Heart right ventricle (tissue), 16 donors: ENCODE measurements at regions of chr1 and their contacts with region 1.

Region 1: GRCh38 chr1:42335050-42335808 is at the start of gene FOXJ3:
- DNase-seq: peak; percentile 94 to 95
- ATAC-seq: peak; percentile 89 to 97 (median 95)
- H3K4me3 ChIP-seq: peak within 1 kb of the TSS; percentile 68 to 98 (median 92)
- H3K27ac ChIP-seq: peak within 1 kb of the TSS; percentile 88 to 97 (median 94)
- H3K4me1 ChIP-seq: peaks cover 4 to 51% (median 33%) of the 10 kb centered on the region in 9 donors
- H3K27me3 ChIP-seq: no peaks in the 10 kb centered on the region
- CTCF ChIP-seq: peak in 2 of 9 donors; percentile 1 to 5
- total RNA-seq, gene FOXJ3: 34.2 to 50.0 (median 41.6) TPM

Region 2: GRCh38 chr1:42456010-42456758 is 121.0 kb after region 1 on chr1 and contains the starts of genes PPCS and ZMYND12:
- intact Hi-C with region 1: loop called in 7 of 10 experiments (anchors 2 to 10 kb)
- DNase-seq: peak; percentile 83 to 93
- ATAC-seq: peak; percentile 95 to 98 (median 97)
- H3K4me3 ChIP-seq: peak within 1 kb of the TSS; percentile 78 to 96 (median 86)
- H3K27ac ChIP-seq: peak within 1 kb of the TSS; percentile 92 to 99 (median 95)
- H3K4me1 ChIP-seq: peaks cover 7 to 30% (median 21%) of the 10 kb centered on the region in 9 donors
- H3K27me3 ChIP-seq: no peaks in the 10 kb centered on the region
- CTCF ChIP-seq: peak in 1 of 9 donors; percentile 19
- total RNA-seq, gene PPCS: 33.2 to 50.0 (median 40.1) TPM
- total RNA-seq, gene ZMYND12: 0.52 to 5.9 (median 2.9) TPM

Region 3: GRCh38 chr1:42462828-42463763 is 127.9 kb after region 1 on chr1 and contains the start of gene CCDC30:
- intact Hi-C with region 1: loop called in 6 of 10 experiments (anchors 5 to 10 kb)
- DNase-seq: peak; percentile 90 to 96
- ATAC-seq: peak; percentile 99 to 100 (median 100)
- H3K4me3 ChIP-seq: peak within 1 kb of the TSS; percentile 47 to 89 (median 76)
- H3K27ac ChIP-seq: peak within 1 kb of the TSS in 6 of 10 donors; percentile 28 to 61 (median 51)
- H3K4me1 ChIP-seq: peaks cover 0 to 25% (median 19%) of the 10 kb centered on the region in 9 donors
- H3K27me3 ChIP-seq: no peaks in the 10 kb centered on the region
- CTCF ChIP-seq: no peak
- total RNA-seq, gene CCDC30: 0.70 to 3.2 (median 1.4) TPM

Region 4: DNA sequence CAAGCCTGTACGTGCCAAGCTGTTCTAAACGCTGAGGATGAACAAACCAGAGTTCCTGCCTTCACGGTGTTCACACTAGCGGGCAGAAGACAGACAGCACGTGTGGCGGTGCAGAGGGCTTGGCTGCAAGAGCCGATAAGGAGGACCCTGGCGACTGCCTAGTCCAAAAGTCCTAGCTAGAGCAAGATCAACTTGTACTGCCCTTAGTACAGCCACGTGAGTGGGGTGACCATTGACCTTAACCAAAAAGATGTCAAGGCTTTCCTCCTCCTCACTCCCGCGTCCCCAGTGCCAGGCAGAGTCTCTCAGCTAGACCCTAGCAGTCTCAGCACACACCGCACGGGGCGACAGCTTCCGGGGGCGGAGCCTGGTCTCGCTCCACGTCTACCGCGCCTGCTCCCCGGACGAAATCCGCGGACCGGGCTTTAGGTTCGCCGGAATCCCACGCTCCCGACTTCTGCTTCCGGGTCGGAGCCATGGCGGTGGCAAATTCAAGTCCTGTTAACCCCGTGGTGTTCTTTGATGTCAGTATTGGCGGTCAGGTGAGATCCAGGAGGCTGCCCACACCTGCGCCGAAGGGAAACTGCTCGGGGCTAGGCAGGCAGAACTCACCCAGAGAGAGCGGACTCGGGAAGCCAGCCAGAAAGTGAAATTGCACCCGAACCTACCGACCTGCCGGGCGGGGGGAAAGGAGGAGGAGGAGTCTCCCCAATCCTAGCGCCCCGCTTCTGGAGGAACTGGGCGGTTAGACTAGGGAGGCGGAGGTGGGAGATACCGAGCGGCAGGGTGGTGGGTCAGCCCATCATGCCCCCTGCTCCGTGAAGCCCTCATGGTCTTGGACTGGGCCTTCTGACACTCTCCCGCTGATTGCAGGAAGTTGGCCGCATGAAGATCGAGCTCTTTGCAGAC is 323.0 kb after region 1 on chr1 and contains the start of gene PPIH:
- intact Hi-C with region 1: loop called in 1 of 10 experiments (anchors 10 kb)
- DNase-seq: peak; percentile 95
- ATAC-seq: peak; percentile 100
- H3K4me3 ChIP-seq: peak within 1 kb of the TSS; percentile 54 to 99 (median 82)
- H3K27ac ChIP-seq: peak within 1 kb of the TSS in 9 of 10 donors; percentile 65 to 90 (median 85)
- H3K4me1 ChIP-seq: peaks cover 0 to 24% (median 13%) of the 10 kb centered on the region in 9 donors
- H3K27me3 ChIP-seq: no peaks in the 10 kb centered on the region
- CTCF ChIP-seq: peak in 8 of 9 donors; percentile 9 to 50 (median 35)
- total RNA-seq, gene PPIH: 15.2 to 23.0 (median 18.3) TPM

Region 5: DNA sequence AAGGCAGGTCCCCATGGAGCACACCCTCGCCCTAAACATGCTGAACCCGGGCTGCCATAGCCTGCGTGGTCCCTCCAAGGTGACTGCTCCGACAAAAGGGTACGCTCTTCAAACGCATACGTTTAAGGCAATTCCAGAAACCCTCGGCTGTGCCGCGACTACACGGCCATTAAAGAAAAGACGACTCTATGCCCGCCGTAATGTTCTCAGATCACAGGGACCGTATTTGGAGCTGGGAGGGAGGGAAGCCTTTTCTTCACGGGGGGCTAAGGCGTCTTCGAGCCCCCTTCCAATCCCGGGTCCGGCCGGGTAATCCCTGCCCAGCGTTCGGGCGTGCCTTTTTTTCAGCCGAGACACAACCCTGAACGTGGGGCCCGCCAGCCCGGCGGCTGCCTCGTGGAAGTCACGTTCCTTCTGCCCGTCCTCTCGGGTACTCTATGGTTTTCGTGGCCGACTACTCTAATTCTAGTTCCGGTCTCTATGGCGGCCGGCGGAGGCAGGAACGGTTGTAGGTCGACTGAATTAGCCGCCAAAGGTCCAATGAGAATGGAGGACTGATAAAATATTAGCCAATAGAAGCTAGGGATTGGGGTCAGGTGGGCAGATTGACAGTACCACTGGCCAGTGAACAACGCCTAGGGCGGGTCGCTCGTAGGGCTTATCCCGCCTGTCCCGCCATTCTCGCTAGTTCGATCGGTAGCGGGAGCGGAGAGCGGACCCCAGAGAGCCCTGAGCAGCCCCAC is 346.7 kb after region 1 on chr1 and contains the start of gene YBX1:
- intact Hi-C with region 1: loop called in 3 of 10 experiments (anchors 5 to 10 kb)
- DNase-seq: peak; percentile 95 to 98
- ATAC-seq: peak; percentile 97 to 99 (median 98)
- H3K4me3 ChIP-seq: peak within 1 kb of the TSS; percentile 63 to 86 (median 82)
- H3K27ac ChIP-seq: peak within 1 kb of the TSS; percentile 90 to 98 (median 94)
- H3K4me1 ChIP-seq: peaks cover 4 to 56% (median 51%) of the 10 kb centered on the region in 9 donors
- H3K27me3 ChIP-seq: no peaks in the 10 kb centered on the region
- CTCF ChIP-seq: no peak
- total RNA-seq, gene YBX1: 639 to 983 (median 777) TPM

Region 6: GRCh38 chr1:42756956-42757891 is 422.0 kb after region 1 on chr1:
- intact Hi-C with region 1: loop called in 3 of 10 experiments (anchors 10 kb)
- DNase-seq: no peak
- ATAC-seq: peak in 5 of 8 donors; percentile 46 to 73 (median 66)
- H3K4me3 ChIP-seq: no peak overlapping the region
- H3K27ac ChIP-seq: no peak overlapping the region
- H3K4me1 ChIP-seq: peaks cover 0 to 10% (median under 1%) of the 10 kb centered on the region in 9 donors
- H3K27me3 ChIP-seq: no peaks in the 10 kb centered on the region
- CTCF ChIP-seq: peak; percentile 43 to 76 (median 65)